Brain microvascular endothelial cell (primary cell): ENCODE measurements at regions of chr15 and their contacts with region 1.

Region 1: GRCh38 chr15:57485869-57486268 is 105.8 kb upstream of the MYZAP start:
- DNase-seq: peak; percentile 78
- H3K4me3 ChIP-seq: no peak overlapping the region
- H3K27ac ChIP-seq: no peak overlapping the region
- H3K27me3 ChIP-seq: no peaks in the 10 kb centered on the region
- CTCF ChIP-seq: no peak

Region 2: GRCh38 chr15:56491110-56491722 is 994.7 kb before region 1 on chr15:
- in situ Hi-C with region 1: loop called (anchors 25 kb)
- DNase-seq: peak; percentile 71
- H3K4me3 ChIP-seq: no peak overlapping the region
- H3K27ac ChIP-seq: no peak overlapping the region
- H3K27me3 ChIP-seq: no peaks in the 10 kb centered on the region
- CTCF ChIP-seq: peak; percentile 98